ENCODE measurements at regions of chr1 and their contacts with region 1.

Region 1: GRCh38 chr1:67149179-67149770 is 14.5 kb upstream of the C1orf141 start:
- DNase-seq: no peak
- ATAC-seq: peak; percentile 88 to 92
- H3K4me3 ChIP-seq: no peak overlapping the region
- H3K27ac ChIP-seq: no peak overlapping the region
- H3K4me1 ChIP-seq: peaks cover 10% of the 10 kb centered on the region
- H3K27me3 ChIP-seq: no peaks in the 10 kb centered on the region
- CTCF ChIP-seq: peak; percentile 63

Region 2: DNA sequence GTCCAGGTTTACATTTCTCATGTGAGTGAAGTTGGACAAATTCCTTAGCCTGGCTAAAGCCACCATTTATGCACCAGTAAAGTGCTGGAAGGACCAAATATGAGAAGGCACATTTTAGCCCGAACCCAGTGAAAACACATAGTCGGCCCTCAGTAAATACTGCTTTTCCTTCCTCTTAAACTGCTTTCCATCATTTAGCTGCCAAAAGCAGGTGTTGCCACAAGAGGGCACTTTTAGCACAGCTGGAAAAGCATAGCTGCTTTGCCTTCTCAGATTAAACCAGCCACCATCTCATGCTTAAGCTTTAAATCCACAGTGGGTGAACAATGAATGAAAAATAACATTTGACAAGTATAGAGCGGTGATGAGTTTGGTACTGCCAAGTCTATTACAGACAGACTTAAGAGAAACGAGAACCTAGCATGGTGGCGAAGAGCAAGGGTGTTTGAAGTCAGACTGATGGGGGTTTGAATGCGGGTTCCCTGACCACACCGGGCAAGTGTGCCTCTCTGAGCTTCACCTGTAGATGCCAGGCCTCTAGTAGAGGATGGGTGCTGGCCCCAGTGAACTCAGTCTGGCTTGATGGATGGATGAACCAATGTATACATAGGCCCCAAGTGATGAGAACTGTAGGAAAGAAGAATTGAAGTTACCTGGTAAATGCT is 153.1 kb before region 1 on chr1:
- intact Hi-C with region 1: loop called (anchors 10 kb)
- DNase-seq: no peak
- ATAC-seq: peak; percentile 75 to 77
- H3K4me3 ChIP-seq: no peak overlapping the region
- H3K27ac ChIP-seq: no peak overlapping the region
- H3K4me1 ChIP-seq: peaks cover 5% of the 10 kb centered on the region
- H3K27me3 ChIP-seq: no peaks in the 10 kb centered on the region
- CTCF ChIP-seq: peak; percentile 67